HEK293 (cell line): ENCODE measurements at regions of chr5 and their contacts with region 1.

Region 1: DNA sequence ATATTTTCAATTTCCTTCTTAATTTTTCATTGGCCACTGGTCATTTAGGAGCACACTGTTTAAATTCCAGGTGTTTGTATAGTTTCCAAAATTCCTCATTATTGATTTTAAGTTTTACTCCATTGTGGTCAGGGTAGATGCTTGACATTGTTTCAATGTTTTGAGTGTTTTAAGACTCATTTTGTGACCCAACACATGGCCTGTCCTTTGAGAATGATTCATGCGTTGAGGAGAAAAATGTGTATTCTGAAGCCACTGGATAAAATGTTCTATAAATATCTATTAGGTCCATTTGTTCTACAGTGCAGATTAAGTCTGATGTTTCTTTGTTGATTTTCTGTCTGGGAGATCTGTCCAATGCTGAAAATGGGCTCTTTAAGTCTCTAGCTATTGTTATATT is 24.4 kb upstream of the FNIP1 start:
- H3K4me3 ChIP-seq: no peak overlapping the region
- H3K27ac ChIP-seq: no peak overlapping the region
- H3K4me1 ChIP-seq: no peaks in the 10 kb centered on the region
- CTCF ChIP-seq: no peak

Region 2: GRCh38 chr5:131773805-131774204 is 47.4 kb before region 1 on chr5:
- CTCF ChIA-PET with region 1: no interaction called
- POLR2A ChIA-PET with region 1: no interaction called
- H3K4me3 ChIP-seq: no peak overlapping the region
- H3K27ac ChIP-seq: no peak overlapping the region
- H3K4me1 ChIP-seq: peaks cover 9% of the 10 kb centered on the region; the same call in 1 of the 2 replicates
- CTCF ChIP-seq: no peak

Region 3: DNA sequence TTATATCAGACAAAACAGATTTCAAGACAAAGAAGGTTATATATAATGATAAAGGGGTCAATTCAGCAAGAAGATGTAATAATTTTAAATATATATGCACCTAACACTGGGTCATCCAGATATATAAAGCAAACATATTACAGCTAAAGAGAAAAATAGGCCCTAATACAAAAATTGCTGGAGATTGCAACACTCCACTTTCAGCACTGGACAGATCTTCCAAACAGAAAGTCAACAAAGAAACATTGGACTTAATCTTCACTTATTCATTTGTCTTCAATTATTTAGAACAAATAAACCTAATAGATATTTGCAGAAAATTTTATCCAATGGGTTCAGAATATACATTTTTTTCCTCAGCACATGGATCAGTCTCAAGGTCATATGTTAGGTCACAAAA is 78.5 kb after region 1 on chr5:
- CTCF ChIA-PET with region 1: no interaction called
- POLR2A ChIA-PET with region 1: no interaction called
- H3K4me3 ChIP-seq: no peak overlapping the region
- H3K27ac ChIP-seq: no peak overlapping the region
- H3K4me1 ChIP-seq: no peaks in the 10 kb centered on the region
- CTCF ChIP-seq: no peak

Region 4: DNA sequence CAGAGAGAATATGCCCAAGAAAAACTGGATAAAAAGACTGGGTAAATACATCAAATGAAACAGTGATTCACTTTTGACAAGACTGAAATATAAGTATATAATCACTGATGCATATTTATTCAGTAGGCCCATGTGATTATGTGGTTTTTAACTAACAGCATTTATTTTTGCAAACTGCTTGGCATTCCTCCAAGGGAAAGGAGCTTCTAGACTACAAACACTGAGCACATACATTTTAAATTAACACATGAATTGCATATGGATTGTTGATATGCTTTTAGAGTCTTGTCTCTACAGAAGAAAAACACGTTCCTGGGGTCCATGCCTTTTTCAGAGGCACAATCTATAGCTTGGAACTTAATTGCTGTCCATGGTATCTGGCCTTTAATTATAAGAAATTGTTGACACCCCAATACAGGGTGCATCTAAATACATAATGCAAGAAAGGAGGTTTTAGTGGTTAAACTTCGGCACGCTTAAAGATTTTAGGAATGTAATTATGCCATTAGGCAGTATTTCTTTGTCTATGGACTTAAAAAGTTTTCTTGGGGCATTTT is 131.2 kb after region 1 on chr5:
- CTCF ChIA-PET with region 1: no interaction called
- POLR2A ChIA-PET with region 1: no interaction called
- H3K4me3 ChIP-seq: no peak overlapping the region
- H3K27ac ChIP-seq: no peak overlapping the region
- H3K4me1 ChIP-seq: no peaks in the 10 kb centered on the region
- CTCF ChIP-seq: no peak

Region 5: DNA sequence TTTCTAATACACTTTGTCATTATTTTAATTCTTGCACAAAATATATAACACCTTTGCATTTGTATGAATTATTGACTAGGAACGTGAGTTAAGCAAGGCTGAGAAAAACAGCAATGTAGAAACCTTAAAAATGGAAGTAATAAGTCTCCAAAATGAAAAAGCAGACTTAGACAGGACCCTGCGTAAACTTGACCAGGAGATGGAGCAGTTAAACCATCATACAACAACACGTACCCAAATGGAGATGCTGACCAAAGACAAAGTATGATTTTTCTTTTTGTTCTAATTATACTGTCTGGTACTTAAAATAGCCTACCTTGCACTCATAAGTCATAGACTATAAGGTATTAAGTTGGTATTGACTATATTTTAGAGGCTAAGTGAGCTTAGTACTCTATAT is 769.9 kb after region 1 on chr5:
- CTCF ChIA-PET with region 1: no interaction called
- POLR2A ChIA-PET with region 1: interaction called, 10 read pairs
- H3K4me3 ChIP-seq: no peak overlapping the region
- H3K27ac ChIP-seq: no peak overlapping the region
- H3K4me1 ChIP-seq: no peaks in the 10 kb centered on the region
- CTCF ChIP-seq: no peak